Activated T-helper 2 cell treated with anti-CD3 and anti-CD28 coated beads, Interferon-gamma antibody, Interleukin-2, Interleukin-4, amounts not matched to agents 10 μg/mL and 5 μg/mL and 100 μg/mL, durations not matched to agents 14 hours and 24 hours and 36 hours (primary cell): ENCODE measurements at regions of chr2 and their contacts with region 1.

Region 1: GRCh38 chr2:136059036-136059472 is 58.9 kb downstream of the CXCR4 start:
- DNase-seq: no peak
- H3K4me3 Mint-ChIP-seq: no peak overlapping the region
- H3K27ac Mint-ChIP-seq: peak overlapping the region; percentile 5
- H3K4me1 Mint-ChIP-seq: peaks cover 56% of the 10 kb centered on the region
- H3K27me3 Mint-ChIP-seq: no peaks in the 10 kb centered on the region

Region 2: GRCh38 chr2:135820003-135820618 is 238.9 kb before region 1 on chr2:
- intact Hi-C with region 1: loop called (anchors 2 kb)
- DNase-seq: peak; percentile 80
- H3K4me3 Mint-ChIP-seq: peak overlapping the region; percentile 71
- H3K27ac Mint-ChIP-seq: peak overlapping the region; percentile 87
- H3K4me1 Mint-ChIP-seq: peaks cover 39% of the 10 kb centered on the region
- H3K27me3 Mint-ChIP-seq: no peaks in the 10 kb centered on the region

Region 3: DNA sequence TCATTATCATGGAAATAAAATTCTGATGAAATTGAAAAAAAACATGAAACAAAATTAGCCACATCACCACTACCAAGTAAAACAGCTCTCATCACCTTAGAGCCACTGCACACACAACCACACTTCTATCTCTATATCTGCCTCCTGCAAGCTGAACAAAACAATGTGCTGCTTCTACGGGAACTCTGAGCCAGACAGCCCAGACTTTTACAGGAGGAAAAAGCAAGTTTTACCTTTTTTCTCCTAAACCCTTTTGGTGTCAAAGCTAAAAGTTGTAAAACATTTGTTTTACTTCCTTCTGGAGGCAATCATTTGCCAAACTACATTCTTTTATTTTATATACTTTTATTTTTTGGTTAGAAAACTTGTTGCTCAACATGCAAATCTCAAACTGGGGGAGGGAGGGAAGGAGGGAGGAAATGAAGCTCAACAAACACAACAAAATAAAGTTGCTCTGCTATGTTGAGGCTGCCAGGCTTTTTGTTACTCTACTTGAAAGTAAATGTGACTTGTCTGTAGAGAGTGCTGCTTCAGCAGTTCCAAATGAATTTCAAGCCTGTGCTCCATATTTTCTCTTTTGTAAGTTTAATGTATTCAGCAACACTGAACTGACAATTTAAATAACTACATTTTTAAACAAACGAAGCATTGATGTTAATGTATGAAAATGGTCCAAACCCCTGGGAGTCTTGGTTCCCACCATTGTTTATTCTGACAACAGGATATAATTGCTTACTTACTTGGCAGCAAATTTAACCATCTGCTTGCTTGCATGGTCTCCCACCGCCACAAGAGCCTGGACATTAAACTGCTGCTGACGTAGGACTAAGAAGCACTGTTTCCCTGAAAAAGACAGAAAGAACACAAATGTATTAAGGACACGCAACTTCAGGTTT is 98.2 kb before region 1 on chr2:
- intact Hi-C with region 1: loop called (anchors 1 kb)
- DNase-seq: peak; percentile 32
- H3K4me3 Mint-ChIP-seq: peak overlapping the region; percentile 66
- H3K27ac Mint-ChIP-seq: peak overlapping the region; percentile 96
- H3K4me1 Mint-ChIP-seq: peaks cover 57% of the 10 kb centered on the region
- H3K27me3 Mint-ChIP-seq: no peaks in the 10 kb centered on the region

Region 4: GRCh38 chr2:136008205-136008865 is 50.7 kb before region 1 on chr2:
- intact Hi-C with region 1: loop called (anchors 2 kb)
- DNase-seq: peak; percentile 63
- H3K4me3 Mint-ChIP-seq: peak overlapping the region; percentile 7
- H3K27ac Mint-ChIP-seq: peak overlapping the region; percentile 80
- H3K4me1 Mint-ChIP-seq: peaks cover 34% of the 10 kb centered on the region
- H3K27me3 Mint-ChIP-seq: no peaks in the 10 kb centered on the region

Region 5: DNA sequence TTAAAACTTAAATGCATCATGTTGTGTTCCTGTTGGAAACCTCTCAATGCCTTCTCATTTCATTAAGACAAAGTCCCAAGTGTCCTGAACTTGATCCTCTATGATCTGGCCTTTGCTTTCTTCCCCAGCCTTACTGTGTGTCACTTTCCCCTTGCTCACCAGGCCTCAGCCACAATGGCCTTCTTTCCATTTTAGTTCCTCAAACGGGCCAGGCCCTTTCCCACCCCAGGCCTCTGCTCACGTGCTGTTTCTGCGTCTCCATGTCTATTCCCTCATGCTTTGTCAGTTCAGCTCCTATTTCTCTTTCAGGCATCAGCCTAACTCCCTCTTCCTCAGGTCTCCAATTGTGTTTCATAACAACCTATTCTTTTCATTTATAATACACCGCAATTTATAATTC is 39.4 kb after region 1 on chr2:
- intact Hi-C with region 1: no loop called
- DNase-seq: no peak
- H3K4me3 Mint-ChIP-seq: no peak overlapping the region
- H3K27ac Mint-ChIP-seq: no peak overlapping the region
- H3K4me1 Mint-ChIP-seq: peaks cover 12% of the 10 kb centered on the region
- H3K27me3 Mint-ChIP-seq: no peaks in the 10 kb centered on the region

Region 6: DNA sequence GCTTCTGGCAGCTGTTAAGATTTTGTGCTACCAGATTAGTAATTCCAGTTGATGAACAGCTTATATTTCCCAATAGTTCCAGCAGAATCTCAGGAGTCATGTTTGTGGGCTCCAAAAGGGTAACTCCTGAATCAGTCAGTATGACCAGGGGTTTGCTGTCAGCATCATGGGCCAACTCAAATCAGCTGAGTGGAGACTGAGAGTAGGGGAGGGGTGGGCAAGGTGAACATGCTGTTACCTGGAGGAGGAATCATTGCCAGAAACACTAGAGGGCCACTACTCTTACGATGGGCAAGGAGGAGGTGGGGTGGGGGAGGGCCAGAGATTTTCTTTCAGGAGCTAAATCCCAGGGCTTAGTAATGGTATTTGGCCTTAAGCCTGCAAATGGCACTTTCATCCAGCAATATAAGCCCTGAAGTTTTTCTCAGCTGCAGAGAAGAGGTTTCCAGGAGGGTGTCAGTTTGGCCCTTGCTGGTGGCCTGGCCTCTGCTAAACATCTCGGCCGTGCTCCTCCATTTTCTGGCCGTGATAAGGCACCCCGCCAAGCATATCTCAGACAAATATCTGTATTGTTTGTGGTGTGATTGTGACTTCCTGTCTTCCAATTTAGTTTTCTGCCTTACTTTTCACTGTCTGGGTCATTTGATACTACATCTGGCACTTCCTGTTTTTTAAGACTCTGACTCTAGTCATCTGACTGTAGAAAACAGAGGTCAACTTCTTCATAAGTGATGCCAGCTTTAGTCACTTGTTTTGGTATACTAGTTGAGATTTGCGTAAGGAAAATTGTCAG is 179.4 kb after region 1 on chr2:
- intact Hi-C with region 1: loop called (anchors 2 kb)
- DNase-seq: peak; percentile 20
- H3K4me3 Mint-ChIP-seq: no peak overlapping the region
- H3K27ac Mint-ChIP-seq: peak overlapping the region; percentile 88
- H3K4me1 Mint-ChIP-seq: peaks cover 53% of the 10 kb centered on the region
- H3K27me3 Mint-ChIP-seq: no peaks in the 10 kb centered on the region